CD8-positive, alpha-beta memory T cell (primary cell): ENCODE measurements at regions of chr16 and their contacts with region 1.

Region 1: GRCh38 chr16:66552286-66553177 is at the start of gene CKLF:
- DNase-seq: peak; percentile 85 to 94 (median 92)
- H3K4me3 ChIP-seq: peak within 1 kb of the TSS; percentile 87
- H3K4me3 Mint-ChIP-seq: peak within 1 kb of the TSS; percentile 90 to 98 (median 97)
- H3K27ac ChIP-seq: peak within 1 kb of the TSS; percentile 85
- H3K27ac Mint-ChIP-seq: peak within 1 kb of the TSS; percentile 92 to 98 (median 96)
- H3K4me1 ChIP-seq: peaks cover 72% of the 10 kb centered on the region
- H3K4me1 Mint-ChIP-seq: peaks cover 76 to 88% (median 86%) of the 10 kb centered on the region in 3 donors
- H3K27me3 ChIP-seq: no peaks in the 10 kb centered on the region
- H3K27me3 Mint-ChIP-seq: peaks cover 0 to 5% of the 10 kb centered on the region in 2 donors
- total RNA-seq, gene CKLF: 118 to 121 TPM

Region 2: DNA sequence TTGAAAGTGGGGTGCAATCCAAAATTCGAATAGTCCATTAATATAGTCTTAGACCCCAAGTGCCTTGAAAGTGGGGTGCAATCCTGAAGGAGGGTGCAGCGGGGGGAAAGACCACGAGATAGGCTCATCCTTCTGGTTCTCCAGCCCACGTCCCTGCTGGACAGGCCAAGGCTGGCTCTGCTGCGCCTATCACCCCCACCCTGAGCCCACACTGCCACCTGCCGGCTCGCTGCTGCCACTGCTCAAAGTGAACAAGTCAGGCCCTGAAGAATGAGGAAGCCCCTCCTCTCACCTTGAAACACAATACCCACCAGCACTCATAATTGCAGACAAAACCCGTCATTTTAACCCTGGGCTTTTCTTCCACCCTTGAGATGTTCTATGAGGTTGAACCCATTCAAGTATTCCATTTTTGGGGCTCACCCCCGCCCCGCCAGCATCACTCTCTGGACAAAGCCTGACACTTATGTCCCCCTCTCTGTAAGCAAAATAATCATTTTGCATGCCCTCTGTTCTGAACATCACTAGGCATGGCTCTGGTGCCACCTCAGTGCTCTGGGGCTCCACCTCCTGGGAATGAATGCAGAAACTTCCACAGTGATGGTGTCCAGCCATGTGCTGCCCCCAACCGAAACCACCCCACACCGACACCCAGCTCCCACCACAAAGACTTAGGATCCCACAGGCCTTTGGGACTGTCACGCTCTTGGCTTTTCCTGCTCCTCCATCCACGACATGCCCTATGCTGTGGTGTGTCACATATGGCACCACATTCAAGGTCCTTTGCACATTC is 68.6 kb before region 1 on chr16:
- CTCF ChIA-PET with region 1: interaction called, 13 read pairs
- POLR2A ChIA-PET with region 1: no interaction called
- DNase-seq: peak; percentile 60 to 81 (median 65)
- H3K4me3 ChIP-seq: no peak overlapping the region
- H3K4me3 Mint-ChIP-seq: no peak overlapping the region
- H3K27ac ChIP-seq: no peak overlapping the region
- H3K27ac Mint-ChIP-seq: peak overlapping the region in 6 of 8 donors; percentile 8 to 95 (median 52)
- H3K4me1 ChIP-seq: peaks cover 10% of the 10 kb centered on the region
- H3K4me1 Mint-ChIP-seq: peaks cover 11 to 23% (median 14%) of the 10 kb centered on the region in 3 donors
- H3K27me3 ChIP-seq: no peaks in the 10 kb centered on the region
- H3K27me3 Mint-ChIP-seq: no peaks in the 10 kb centered on the region

Region 3: DNA sequence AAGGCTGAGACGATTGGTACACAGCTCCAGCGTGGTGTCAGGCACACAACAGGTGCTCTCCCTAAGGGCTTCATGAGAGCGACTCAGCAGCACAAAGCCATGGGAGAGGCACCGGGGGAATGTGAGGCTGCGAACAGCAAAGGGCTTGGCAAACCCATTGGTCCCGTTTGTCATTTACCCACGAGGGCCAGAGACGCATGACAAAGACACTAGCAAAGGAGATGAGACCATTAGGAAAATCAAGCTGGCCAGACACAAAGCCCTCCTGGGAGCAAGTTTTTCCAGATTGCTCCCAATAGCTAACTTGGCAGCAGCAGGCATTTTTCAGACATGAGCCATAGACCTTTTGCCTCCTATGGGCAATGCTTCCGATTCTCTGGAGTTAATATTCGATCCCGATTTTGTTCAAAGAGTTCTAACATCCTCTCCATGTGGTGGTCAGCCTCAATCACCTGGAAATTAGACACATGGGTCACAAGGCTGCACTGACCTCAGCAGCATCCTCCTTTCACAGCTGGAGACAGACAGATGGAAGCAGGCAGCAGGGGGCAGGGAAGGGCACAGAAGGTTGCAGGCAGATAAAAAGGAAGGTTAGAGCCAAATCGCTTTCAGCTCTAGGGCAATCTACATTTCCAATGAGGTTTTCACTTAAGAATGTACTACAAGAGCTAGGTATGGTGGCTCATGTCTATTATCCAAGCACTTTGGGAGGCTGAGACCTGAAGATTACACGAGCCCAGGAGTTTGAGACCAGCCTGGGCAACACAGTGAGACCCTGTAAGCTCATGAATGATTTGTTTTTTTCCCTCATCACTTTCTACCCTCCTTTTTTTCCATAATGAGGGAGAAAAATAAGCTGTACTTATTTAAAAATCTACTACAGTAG is 40.7 kb before region 1 on chr16:
- CTCF ChIA-PET with region 1: interaction called, 14 read pairs
- POLR2A ChIA-PET with region 1: interaction called, 7 read pairs
- DNase-seq: no peak
- H3K4me3 ChIP-seq: no peak overlapping the region
- H3K4me3 Mint-ChIP-seq: peak overlapping the region in 1 of 7 donors; percentile 8
- H3K27ac ChIP-seq: no peak overlapping the region
- H3K27ac Mint-ChIP-seq: peak overlapping the region in 7 of 8 donors; percentile 16 to 86 (median 66)
- H3K4me1 ChIP-seq: peaks cover 25% of the 10 kb centered on the region
- H3K4me1 Mint-ChIP-seq: peaks cover 33 to 44% (median 35%) of the 10 kb centered on the region in 3 donors
- H3K27me3 ChIP-seq: no peaks in the 10 kb centered on the region
- H3K27me3 Mint-ChIP-seq: no peaks in the 10 kb centered on the region

Region 4: GRCh38 chr16:66534376-66534799 is 18.1 kb before region 1 on chr16:
- CTCF ChIA-PET with region 1: interaction called, 5 read pairs
- POLR2A ChIA-PET with region 1: interaction called, 12 read pairs
- DNase-seq: no peak
- H3K4me3 ChIP-seq: no peak overlapping the region
- H3K4me3 Mint-ChIP-seq: no peak overlapping the region
- H3K27ac ChIP-seq: no peak overlapping the region
- H3K27ac Mint-ChIP-seq: peak overlapping the region in 5 of 8 donors; percentile 2 to 39 (median 30)
- H3K4me1 ChIP-seq: no peaks in the 10 kb centered on the region
- H3K4me1 Mint-ChIP-seq: peaks cover 4 to 11% (median 8%) of the 10 kb centered on the region in 3 donors
- H3K27me3 ChIP-seq: no peaks in the 10 kb centered on the region
- H3K27me3 Mint-ChIP-seq: no peaks in the 10 kb centered on the region